ENCODE measurements at regions of chr1 and their contacts with region 1.

Region 1: GRCh38 chr1:211133836-211134669 is at the start of gene KCNH1:
- DNase-seq: peak; percentile 26
- H3K4me3 ChIP-seq: peak within 1 kb of the TSS; percentile 58
- H3K27ac ChIP-seq: no peak within 1 kb of the TSS
- H3K27me3 ChIP-seq: peaks cover 17% of the 10 kb centered on the region
- CTCF ChIP-seq: peak; percentile 73
- polyA plus RNA-seq, gene KCNH1: 0.31 and 0.62 TPM in 2 replicates

Region 2: GRCh38 chr1:210407207-210407886 is 726.7 kb before region 1 on chr1:
- CTCF ChIA-PET with region 1: interaction called, 258 read pairs
- POLR2A ChIA-PET with region 1: no interaction called
- DNase-seq: peak; percentile 42
- H3K4me3 ChIP-seq: no peak overlapping the region
- H3K27ac ChIP-seq: no peak overlapping the region
- H3K27me3 ChIP-seq: no peaks in the 10 kb centered on the region
- CTCF ChIP-seq: peak; percentile 98

Region 3: DNA sequence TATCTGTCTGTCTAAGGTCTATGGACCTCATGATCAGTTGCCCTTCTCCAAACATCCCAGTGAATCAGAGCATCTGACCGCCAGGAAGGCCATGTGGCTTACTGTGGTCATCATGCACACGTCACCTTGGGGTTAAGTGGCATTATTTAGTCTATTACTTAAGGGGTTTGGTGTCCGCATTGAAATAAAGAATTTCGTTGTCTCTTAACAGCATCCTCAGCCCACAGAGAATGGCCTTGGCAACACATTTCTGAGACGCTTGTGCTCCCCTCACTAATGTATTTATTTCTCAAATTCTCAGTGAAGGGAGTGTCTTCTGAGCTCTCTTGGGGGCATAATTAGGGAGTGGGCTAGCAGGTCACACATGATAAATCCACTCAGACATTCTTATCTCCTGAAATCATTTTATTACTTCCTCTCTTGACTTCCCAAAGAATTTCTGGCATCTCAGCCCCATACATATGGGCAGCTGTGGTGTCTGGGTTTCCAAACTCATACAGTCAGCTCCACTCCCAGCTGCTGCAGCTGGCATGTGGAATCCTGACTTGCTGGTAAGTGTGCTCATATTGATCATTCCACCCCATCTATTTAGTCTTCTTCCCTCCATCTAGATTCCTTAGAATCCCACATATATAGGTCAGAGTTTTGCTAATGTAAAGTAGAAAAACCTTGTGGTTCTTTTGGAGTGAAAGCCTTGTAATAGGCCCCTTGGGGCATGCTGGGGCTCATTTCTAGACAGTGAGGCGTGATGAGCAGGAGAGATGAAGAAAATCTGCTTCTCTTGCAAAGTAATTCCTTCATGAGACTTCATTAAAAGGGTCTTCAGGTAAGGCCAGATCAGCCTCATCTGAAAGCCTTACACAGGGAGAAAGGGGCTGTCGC is 694.9 kb before region 1 on chr1:
- CTCF ChIA-PET with region 1: interaction called, 30 read pairs
- POLR2A ChIA-PET with region 1: interaction called, 3 read pairs
- DNase-seq: peak; percentile 94
- H3K4me3 ChIP-seq: no peak overlapping the region
- H3K27ac ChIP-seq: peak overlapping the region; percentile 92
- H3K27me3 ChIP-seq: no peaks in the 10 kb centered on the region
- CTCF ChIP-seq: no peak

Region 4: GRCh38 chr1:210464519-210465039 is 669.5 kb before region 1 on chr1:
- CTCF ChIA-PET with region 1: interaction called, 11 read pairs
- POLR2A ChIA-PET with region 1: no interaction called
- DNase-seq: no peak
- H3K4me3 ChIP-seq: no peak overlapping the region
- H3K27ac ChIP-seq: no peak overlapping the region
- H3K27me3 ChIP-seq: no peaks in the 10 kb centered on the region
- CTCF ChIP-seq: no peak

Region 5: DNA sequence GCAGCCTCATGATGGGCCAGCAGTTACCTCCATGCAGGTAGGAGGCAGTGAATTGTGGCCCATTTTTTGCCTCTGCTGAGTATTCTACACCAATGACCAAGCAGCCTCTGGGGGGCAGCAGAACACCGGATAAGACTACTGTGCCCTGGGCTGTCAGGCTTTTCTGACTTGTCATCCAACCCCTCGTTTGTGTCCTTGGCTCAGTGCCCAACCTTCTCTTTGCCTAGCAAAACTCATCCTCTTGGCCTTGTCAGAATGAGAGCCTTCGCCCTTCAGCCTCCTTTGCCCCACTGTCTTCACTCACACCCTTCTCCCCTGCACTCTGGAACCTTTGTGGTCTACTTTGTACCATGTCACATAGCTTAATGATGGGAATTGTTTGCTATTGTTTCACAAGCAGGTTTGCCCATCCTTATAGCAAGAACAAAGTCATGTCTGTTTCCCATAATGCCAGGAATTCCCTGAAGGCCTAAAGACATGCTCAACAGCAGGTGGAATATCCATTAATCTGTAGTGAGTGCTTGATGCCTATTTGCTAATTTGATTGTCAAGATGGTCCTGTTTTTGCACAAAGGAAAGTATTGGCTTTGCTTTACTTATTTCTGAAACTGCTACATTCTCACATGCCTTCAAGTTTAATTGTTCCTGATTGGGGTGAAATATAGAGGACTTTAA is 549.5 kb before region 1 on chr1:
- CTCF ChIA-PET with region 1: interaction called, 168 read pairs
- POLR2A ChIA-PET with region 1: interaction called, 6 read pairs
- DNase-seq: peak; percentile 34
- H3K4me3 ChIP-seq: no peak overlapping the region
- H3K27ac ChIP-seq: no peak overlapping the region
- H3K27me3 ChIP-seq: no peaks in the 10 kb centered on the region
- CTCF ChIP-seq: peak; percentile 81

Region 6: DNA sequence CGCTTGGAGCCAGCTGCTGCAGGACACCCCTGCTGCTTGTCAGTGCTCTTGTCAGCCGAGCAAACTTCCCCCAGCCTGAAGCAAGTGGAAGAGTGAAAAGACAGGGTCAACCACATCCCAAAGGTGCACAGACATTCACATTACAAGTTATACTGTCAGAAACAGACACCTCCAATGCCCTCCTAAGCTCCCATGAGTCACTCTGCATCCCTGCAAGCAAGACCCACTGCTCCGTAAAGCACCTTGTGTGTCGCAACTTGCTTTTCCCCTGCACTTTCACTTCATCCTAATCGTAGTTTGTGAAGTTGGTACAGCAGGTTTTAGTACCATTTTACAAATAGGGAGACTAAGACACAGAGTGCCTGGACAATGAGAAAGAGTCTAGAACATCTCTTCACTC is 51.2 kb before region 1 on chr1:
- CTCF ChIA-PET with region 1: no interaction called
- POLR2A ChIA-PET with region 1: no interaction called
- DNase-seq: no peak
- H3K4me3 ChIP-seq: no peak overlapping the region
- H3K27ac ChIP-seq: no peak overlapping the region
- H3K27me3 ChIP-seq: no peaks in the 10 kb centered on the region
- CTCF ChIP-seq: no peak

Region 7: DNA sequence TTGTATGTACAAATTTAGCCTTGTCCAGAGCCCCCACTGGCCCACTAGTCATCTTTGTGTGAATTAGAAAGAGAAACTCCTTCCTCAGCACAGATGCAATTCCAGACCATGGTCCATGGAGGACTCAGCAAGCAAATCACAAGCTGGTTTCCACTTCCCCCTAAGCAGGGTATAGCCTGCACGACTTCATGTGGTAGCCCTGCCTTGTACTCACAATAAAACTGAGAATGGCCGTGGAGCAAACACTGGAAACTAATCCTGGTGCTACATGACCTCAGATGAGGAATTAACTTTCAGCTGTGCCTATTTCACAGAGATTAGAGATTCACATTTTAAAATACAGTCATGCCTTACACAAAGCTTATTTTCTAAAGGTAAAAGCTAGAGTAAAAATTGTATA is 32.6 kb before region 1 on chr1:
- CTCF ChIA-PET with region 1: interaction called, 11 read pairs
- POLR2A ChIA-PET with region 1: no interaction called
- DNase-seq: no peak
- H3K4me3 ChIP-seq: no peak overlapping the region
- H3K27ac ChIP-seq: no peak overlapping the region
- H3K27me3 ChIP-seq: no peaks in the 10 kb centered on the region
- CTCF ChIP-seq: no peak

Measured in AG04450 (cell line).